ENCODE measurements at regions of chr5 and their contacts with region 1.

Region 1: GRCh38 chr5:165393839-165394238 is 1888.4 kb downstream of the MAT2B start:
- DNase-seq: no peak

Region 2: GRCh38 chr5:165349735-165350134 is 44.1 kb before region 1 on chr5:
- intact Hi-C with region 1: loop called in 1 of 2 experiments (anchors 10 kb)
- DNase-seq: no peak

Region 3: DNA sequence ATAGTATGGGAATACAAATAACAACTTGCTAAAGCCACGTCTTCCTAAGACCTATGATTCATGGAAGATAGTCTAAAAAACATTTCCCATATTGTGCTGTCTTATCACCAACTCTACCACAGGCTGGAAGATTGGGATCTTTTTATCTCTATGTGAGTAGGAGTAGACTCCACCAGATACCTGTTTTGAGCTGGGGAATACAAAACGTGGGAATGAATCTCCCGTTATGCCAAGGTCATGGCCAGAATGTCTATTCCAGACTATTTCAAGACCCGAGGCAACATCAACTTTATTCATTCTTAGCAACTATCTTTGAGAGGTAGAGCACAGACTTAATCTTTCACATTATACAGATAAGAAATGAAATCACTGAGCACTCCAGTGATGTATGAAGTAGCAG is 546.7 kb after region 1 on chr5:
- intact Hi-C with region 1: no loop called
- DNase-seq: no peak

Measured in posterior vena cava (tissue), 2 donors.